Aorta (tissue), 5 donors: ENCODE measurements at regions of chr1 and their contacts with region 1.

Region 1: DNA sequence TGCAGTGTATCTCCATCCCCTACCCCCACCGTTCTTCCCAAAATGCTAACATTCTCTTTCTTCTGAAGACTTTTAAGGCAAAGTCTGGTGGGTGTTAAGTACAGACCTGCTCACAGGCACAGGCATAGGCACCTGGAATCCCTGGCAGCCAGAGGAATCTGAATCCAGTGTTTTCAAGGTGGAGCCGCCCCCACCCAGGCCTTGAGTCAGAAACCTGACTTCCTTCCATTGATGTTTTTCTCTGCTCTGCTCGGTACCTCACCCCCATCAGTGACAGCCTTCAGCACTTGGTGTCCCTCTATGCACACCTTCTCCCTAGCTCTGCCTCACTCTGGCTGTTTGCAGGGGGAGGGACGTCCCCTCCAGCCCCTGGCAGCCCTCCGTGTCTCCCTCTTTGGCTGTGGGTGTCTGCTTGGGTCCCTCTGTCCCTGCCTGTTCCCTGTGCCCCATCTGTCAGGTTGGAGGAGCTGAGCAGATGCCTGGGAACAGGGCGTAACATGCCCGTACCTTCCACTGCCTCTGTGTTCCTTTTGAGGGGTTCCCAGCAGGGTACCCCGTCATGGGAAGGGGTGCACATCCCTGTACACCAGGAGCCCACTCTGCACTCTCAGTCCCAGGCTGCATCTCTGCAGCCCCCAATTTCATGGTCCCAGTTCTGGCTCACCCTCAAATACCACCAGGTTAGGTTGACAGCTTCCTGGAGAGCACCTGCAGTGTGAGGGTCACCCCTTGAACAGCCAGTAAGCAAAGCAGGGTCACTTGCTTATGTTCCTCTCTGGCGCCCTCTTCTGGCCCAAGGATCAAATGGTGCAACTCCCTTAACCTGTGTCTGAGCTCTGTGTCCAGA is 6.7 kb downstream of the NCDN start:
- DNase-seq: peak; percentile 85 to 90
- ATAC-seq: peak; percentile 59
- H3K4me3 ChIP-seq: no peak overlapping the region
- H3K27ac ChIP-seq: no peak overlapping the region
- H3K4me1 ChIP-seq: no peaks in the 10 kb centered on the region
- H3K27me3 ChIP-seq: no peaks in the 10 kb centered on the region

Region 2: DNA sequence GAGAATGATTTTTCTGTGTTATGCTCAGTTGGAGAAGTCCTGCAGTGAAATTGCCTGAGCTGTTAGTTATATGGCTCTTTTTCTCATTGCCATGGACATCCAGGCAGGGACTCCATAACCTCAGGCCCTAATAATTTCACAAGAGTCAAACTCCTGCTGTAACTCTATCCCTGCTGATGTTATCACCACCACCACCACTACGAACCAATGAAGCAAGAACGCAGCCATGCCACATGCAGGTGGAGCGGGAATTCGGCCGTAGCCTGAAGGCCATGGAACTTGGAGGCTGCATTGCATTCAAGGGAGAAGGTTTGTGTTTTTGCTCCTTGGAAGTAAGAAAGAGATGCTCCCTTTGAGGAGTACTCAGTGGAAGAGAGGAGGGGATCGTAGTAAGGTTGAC is 618.0 kb before region 1 on chr1:
- intact Hi-C with region 1: no loop called
- DNase-seq: no peak
- ATAC-seq: no peak
- H3K4me3 ChIP-seq: no peak overlapping the region
- H3K27ac ChIP-seq: no peak overlapping the region
- H3K4me1 ChIP-seq: no peaks in the 10 kb centered on the region
- H3K27me3 ChIP-seq: no peaks in the 10 kb centered on the region

Region 3: GRCh38 chr1:35660581-35661473 is 96.6 kb after region 1 on chr1:
- intact Hi-C with region 1: no loop called
- DNase-seq: no peak
- ATAC-seq: no peak
- H3K4me3 ChIP-seq: no peak overlapping the region
- H3K27ac ChIP-seq: no peak overlapping the region
- H3K4me1 ChIP-seq: no peaks in the 10 kb centered on the region
- H3K27me3 ChIP-seq: no peaks in the 10 kb centered on the region

Region 4: DNA sequence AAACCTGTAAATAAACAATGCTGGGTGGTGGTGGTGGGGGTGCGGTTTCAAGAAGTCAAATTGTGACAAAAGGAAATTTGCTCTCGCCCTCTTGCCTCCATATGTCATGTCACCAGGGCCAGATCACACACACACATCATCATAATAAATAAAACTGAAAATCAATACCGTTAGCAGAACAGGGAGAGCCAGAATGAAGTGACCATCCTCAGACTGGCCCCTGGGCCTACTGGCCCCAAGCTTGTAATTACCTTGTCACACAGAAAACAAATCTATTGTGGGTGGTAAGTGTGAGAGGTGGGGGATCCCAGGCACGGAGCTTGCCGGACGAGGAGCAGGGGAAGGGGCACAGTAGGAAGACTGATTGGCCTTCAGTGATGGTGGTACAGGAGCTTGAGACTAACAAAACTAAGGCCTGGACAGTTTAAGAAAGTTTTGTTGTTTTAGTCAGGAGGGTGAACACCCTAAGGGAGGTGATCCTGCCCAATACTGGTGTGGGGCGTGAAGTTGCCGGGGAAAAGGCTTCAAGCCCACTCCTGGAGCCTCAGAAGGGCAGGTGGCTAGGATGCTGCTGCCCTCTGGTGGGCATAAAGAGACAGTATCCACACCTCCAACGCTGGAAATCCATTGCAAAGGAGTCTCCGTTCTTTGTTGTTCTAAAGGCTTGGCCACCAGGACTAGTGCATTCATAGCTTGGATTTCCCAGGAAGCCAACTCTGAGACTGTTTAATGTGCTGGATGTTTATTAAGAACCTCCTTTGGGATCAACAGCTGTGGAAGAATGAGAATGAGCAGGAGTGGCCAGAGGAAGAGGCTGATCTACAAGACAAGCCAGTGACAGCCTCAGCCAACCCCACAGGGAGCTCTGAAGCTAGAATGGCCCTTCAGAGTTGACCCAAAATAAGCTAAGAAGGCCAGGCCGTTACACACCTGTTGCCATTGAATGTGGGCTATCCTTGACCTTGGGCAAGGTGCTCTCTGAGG is 162.5 kb after region 1 on chr1:
- intact Hi-C with region 1: loop called (anchors 2 to 5 kb)
- DNase-seq: peak in 1 of 2 donors; percentile 49
- ATAC-seq: peak; percentile 74
- H3K4me3 ChIP-seq: no peak overlapping the region
- H3K27ac ChIP-seq: no peak overlapping the region
- H3K4me1 ChIP-seq: no peaks in the 10 kb centered on the region
- H3K27me3 ChIP-seq: no peaks in the 10 kb centered on the region

Region 5: DNA sequence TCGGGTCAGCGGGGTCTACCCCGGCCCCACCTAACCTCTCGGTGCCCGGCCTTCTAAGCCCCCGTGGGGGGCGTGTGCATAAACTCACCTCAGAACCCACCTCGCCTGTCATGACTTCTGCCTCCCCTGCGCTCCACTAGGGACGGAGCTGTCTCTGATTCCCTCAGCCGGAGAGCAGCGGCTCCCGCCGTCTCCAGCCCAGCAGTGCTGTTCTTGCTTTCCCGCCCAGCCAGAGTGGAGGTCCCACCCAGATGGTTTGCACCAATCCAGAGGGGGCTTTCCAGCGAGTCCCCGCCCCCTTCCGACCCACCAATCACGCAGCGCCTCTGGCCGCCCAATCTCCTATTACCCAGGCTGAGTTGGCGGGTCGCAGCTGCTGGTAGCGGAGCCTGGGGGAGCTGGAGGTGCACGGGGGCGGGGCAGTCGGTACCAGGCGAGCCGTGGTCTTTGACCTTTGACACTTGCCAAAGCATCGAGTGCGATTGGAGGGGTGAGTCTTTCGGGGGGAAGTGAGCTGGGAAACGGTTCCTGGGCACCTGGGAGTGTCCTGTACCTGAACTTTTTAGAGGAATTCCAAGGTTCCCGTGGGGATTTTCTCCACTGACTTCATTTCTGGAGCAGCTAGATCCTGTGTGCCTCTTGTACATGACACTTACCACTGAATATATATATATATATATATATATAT is 205.6 kb after region 1 on chr1 and contains the start of gene CLSPN:
- intact Hi-C with region 1: loop called (anchors 5 kb)
- DNase-seq: peak; percentile 97
- ATAC-seq: peak; percentile 98
- H3K4me3 ChIP-seq: peak within 1 kb of the TSS; percentile 54 to 69
- H3K27ac ChIP-seq: peak within 1 kb of the TSS in 1 of 2 donors; percentile 71
- H3K4me1 ChIP-seq: no peaks in the 10 kb centered on the region
- H3K27me3 ChIP-seq: no peaks in the 10 kb centered on the region
- total RNA-seq, gene CLSPN: 0.96 to 1.1 TPM